Motor neuron (in vitro differentiated cells): ENCODE measurements at regions of chr1 and their contacts with region 1.

Region 1: DNA sequence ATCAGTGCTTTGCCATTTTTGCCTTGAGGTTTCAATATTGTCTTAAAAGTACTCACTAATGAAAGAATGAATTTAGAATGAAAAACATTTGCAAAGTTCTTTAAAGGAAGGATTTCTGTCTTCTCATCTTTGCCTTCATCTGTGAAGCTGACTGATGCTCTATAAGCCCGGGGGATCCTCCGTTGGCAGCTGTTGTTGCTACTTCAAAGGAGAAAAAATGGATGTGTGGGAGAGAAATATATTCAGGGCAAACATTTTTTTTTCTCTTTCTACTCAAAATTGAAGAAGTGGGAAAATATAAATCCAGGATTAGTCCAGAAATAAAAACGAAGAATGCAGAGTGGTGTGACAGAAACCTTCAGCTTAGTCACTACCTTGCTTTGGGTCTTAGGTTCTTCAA is 142.5 kb downstream of the OLFM3 start:
- ATAC-seq: no peak
- H3K4me3 ChIP-seq: no peak overlapping the region
- H3K27ac ChIP-seq: no peak overlapping the region
- H3K4me1 ChIP-seq: peaks cover 0 to 6% of the 10 kb centered on the region in 2 donors

Region 2: GRCh38 chr1:101971304-101971703 is 117.0 kb after region 1 on chr1:
- in situ Hi-C with region 1: loop called in 1 of 9 experiments (anchors 25 kb)
- ATAC-seq: no peak
- H3K4me3 ChIP-seq: no peak overlapping the region
- H3K27ac ChIP-seq: no peak overlapping the region
- H3K4me1 ChIP-seq: no peaks in the 10 kb centered on the region